ENCODE measurements at regions of chr18 and their contacts with region 1.

Region 1: GRCh38 chr18:62714671-62715435 is 488 bp upstream of the PHLPP1 start:
- DNase-seq: peak; percentile 100

Region 2: GRCh38 chr18:62584241-62585120 is 130.4 kb before region 1 on chr18:
- intact Hi-C with region 1: loop called (anchors 2 kb)
- DNase-seq: peak; percentile 76 to 98 (median 86)

Region 3: DNA sequence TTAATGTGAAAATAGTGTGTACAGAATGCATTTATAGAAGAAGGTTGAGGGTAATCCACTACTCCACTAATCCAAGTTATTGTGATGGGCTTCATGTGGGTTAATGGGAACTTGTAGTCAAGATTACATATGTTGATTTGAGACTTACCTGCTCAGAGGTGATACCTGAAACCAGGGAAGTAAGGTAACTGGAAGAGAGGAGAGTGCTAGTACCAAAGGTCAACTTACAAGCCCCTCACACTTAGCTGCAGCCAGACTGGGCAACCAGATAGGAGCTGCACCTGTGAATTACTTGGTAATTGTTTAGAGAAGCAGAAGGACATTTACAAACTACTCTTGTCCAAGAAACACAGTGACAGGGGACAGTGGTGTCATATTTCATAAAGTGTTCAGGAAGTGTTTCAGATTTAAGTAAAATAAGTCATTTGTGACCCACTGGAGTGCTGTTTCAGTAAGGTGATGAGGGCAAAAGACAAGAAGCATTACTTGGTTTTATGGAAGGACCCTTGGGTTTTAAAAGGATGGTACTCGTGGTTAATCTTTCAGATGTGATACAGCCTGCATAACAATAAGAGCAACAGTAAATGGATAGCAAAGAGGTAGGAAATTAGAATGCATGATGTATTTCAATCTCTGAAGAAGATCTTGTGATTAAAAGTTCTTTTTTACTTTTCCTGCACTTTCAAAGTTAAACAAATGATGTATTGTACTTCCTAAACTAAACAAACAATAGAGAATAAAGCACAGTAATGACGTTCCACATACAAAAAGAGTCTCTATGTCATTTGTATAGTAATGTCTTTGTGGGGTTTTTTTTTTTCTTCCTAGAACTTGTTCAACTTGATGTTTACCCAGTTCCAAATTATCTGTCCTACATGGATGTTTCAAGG is 189.8 kb after region 1 on chr18:
- intact Hi-C with region 1: loop called (anchors 5 kb)
- DNase-seq: no peak

Region 4: DNA sequence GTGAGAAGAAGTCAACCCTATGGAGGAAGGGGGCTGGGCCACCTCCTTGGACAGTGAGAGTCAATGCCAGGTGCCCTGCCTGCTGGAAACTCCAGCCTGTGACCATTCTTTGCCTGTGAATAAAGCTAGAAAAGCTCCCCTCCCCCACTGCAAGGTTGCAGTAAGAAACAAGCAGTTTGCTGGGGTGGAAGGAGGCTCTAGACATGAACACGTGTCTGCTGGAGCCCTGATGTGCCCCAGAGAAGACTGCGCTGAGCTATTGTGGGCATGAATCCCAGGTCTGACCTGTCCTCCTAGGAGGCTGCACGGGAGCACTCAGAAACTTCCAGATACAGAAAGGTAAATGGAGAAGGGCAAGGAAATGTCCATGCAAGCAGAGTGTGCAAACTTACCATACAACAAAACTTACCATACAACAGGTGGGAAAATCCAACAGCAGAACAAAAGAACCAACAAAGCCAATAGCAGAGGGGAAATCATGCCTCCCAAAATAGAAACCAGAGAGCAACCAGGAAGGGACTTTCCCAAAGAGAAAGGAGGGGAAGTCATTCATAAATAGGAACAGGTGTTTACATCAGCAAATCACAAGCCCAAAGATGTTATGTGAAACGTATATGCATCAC is 326.0 kb after region 1 on chr18:
- intact Hi-C with region 1: no loop called
- DNase-seq: no peak

Region 5: DNA sequence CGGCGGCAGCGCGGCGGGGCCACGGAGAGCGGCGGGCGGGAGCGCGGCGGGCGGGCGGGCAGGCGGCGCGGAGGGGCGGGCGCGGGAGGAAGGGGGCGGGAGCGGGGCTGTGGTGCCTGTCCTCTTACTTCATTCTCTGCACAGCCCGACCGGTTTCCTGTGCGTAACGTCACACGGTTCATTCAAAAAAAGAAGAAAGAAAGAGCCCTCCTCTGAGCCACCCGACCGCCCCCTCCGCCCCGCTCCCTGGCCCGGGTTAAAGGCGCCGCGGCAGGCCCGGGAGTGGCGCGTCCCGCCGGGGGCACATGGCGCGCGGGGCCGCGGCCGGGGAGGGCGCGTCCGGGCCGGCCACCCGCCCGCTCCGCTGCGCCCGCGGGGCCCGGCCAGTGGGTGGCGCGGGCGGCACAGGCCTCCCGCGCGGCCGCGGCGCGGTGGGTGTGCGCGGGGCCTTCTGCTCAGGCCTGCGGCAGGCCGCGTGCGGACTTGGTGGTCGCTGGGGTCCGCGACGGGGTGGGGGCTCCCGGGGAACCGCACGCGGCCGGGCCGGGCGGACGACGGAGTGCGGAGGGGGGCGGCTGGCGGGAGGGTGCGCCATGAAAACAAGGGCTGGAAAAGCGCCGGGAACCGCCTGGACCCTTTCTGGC is 605.3 kb after region 1 on chr18:
- intact Hi-C with region 1: loop called (anchors 5 kb)
- DNase-seq: peak; percentile 68 to 96 (median 78)

Measured in posterior cingulate gyrus (tissue), 11 donors.